Activated CD8-positive, alpha-beta T cell treated with anti-CD3 and anti-CD28 coated beads, Interleukin-2, amount 10 ng/mL, durations not matched to agents 7 days and 5 days (primary cell): ENCODE measurements at regions of chr2 and their contacts with region 1.

Region 1: DNA sequence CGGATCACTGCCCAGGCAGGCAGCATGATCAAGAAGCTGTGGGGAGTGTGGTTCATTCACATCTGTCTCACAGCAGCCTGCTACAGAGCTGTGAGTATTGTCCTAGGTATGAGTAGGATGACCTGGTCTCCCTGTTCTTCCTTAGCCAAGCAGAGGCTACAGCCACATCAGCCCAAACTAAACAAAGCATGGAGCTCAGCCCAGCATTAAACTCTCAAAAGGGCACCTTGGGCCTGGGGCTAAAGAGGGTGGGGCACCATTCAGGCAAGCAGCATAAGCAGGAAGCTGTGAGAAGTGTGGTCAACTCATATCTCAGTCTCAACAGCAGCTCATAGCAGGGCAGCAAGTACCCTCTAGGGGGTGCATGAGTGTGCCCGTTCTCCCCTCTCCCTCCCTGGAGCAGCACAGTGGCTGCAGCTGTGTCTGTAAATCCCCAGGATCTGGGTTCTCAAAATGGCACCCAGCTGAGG is 139.6 kb downstream of the TRABD2A start:
- DNase-seq: peak; percentile 75
- ATAC-seq: peak; percentile 99
- H3K4me3 Mint-ChIP-seq: no peak overlapping the region
- H3K27ac Mint-ChIP-seq: peak overlapping the region; percentile 85
- H3K4me1 Mint-ChIP-seq: peaks cover 15% of the 10 kb centered on the region
- H3K27me3 Mint-ChIP-seq: no peaks in the 10 kb centered on the region

Region 2: GRCh38 chr2:84022810-84023431 is 718.4 kb before region 1 on chr2:
- CTCF ChIA-PET with region 1: no interaction called
- POLR2A ChIA-PET with region 1: no interaction called
- DNase-seq: peak; percentile 28
- ATAC-seq: no peak
- H3K4me3 Mint-ChIP-seq: no peak overlapping the region
- H3K27ac Mint-ChIP-seq: no peak overlapping the region
- H3K4me1 Mint-ChIP-seq: no peaks in the 10 kb centered on the region
- H3K27me3 Mint-ChIP-seq: no peaks in the 10 kb centered on the region

Region 3: DNA sequence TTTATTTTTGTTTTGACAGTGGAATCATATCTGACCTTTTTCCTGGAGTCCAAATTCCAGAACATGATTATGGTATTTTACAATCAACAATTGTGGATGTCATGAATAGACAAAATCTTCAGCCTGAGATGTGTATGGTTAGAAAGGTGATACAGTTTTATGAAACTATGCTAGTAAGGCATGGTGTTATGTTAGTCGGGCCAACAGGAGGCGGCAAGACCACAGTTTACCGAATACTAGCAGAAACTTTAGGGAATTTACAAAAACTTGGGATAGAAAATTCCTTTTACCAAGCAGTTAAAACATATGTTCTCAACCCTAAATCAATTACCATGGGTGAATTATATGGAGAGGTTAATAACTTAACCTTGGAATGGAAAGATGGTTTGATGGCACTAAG is 88.0 kb before region 1 on chr2:
- CTCF ChIA-PET with region 1: interaction called, 13 read pairs
- POLR2A ChIA-PET with region 1: no interaction called
- DNase-seq: no peak
- ATAC-seq: no peak
- H3K4me3 Mint-ChIP-seq: no peak overlapping the region
- H3K27ac Mint-ChIP-seq: peak overlapping the region; percentile 45
- H3K4me1 Mint-ChIP-seq: peaks cover 66% of the 10 kb centered on the region
- H3K27me3 Mint-ChIP-seq: no peaks in the 10 kb centered on the region

Region 4: DNA sequence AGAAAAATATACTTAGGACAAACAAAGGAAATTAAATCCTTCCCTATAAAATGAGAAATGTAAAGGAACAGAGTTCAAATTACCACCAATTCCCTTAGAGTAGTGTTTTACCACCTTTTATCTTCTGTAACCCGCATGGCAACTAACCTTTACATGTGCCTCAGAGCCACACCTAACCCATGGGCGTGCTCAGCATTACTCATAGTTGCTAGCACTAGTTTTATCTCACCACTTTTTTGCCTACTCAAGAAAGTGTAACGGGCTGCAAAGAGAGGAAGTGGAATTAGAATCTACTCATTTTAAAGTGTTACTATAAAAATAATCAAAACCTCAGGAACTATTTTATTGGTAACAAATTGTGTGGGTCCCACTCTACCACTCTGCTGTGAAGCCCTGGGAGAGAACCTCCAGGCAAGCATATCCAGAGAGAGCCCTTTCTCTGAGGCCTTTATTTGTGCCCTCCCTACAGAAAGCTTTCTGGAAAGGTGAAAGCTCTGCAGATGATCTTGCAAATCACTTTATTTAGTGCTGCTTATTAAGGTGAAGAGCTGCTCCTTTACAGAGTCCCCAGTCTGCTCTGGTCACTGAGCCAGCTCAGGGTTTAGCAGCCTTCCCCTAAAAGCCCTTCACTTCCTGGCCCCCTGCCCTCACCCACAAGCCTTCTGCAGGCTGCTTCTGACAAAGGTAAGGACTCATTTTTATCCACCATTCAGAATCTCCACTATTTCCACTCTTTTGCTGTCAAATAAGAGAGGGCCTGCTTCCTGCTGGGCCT is 40.8 kb after region 1 on chr2:
- CTCF ChIA-PET with region 1: interaction called, 17 read pairs
- POLR2A ChIA-PET with region 1: interaction called, 5 read pairs
- DNase-seq: peak; percentile 77
- ATAC-seq: peak; percentile 93
- H3K4me3 Mint-ChIP-seq: peak overlapping the region; percentile 66
- H3K27ac Mint-ChIP-seq: peak overlapping the region; percentile 95
- H3K4me1 Mint-ChIP-seq: peaks cover 68% of the 10 kb centered on the region
- H3K27me3 Mint-ChIP-seq: no peaks in the 10 kb centered on the region

Region 5: GRCh38 chr2:84846041-84846663 is 104.8 kb after region 1 on chr2:
- CTCF ChIA-PET with region 1: interaction called, 16 read pairs
- POLR2A ChIA-PET with region 1: no interaction called
- DNase-seq: peak; percentile 72
- ATAC-seq: peak; percentile 75
- H3K4me3 Mint-ChIP-seq: peak overlapping the region; percentile 38
- H3K27ac Mint-ChIP-seq: peak overlapping the region; percentile 96
- H3K4me1 Mint-ChIP-seq: peaks cover 92% of the 10 kb centered on the region
- H3K27me3 Mint-ChIP-seq: no peaks in the 10 kb centered on the region

Region 6: DNA sequence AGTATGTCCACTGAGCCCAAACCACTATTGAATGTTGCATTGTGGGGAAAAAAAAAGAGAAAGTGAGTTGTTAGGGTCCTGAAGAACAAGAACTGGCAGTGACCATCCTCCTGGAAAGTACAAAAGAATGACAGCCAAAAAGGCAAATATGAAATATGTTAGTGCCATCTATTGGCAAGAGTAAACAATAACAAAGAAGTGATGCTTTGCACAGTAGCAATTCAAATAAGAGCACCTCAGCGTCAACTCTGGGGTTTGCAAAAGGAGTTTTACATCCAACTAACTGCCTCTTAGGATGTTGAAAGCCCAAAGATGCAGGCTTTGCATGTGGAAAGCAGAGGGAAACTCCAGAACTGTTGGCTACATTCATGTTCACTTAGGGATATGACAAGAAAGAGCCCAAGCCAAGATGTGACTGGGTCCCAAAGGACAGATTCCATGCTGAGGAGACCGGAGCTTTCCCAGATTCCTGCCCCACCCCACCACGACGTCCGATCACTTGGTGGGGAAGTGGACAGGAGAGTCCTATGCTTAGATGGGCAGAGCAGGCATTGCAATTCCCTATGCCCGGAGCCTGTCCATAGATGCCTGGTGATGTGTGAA is 124.0 kb after region 1 on chr2:
- CTCF ChIA-PET with region 1: interaction called, 18 read pairs
- POLR2A ChIA-PET with region 1: no interaction called
- DNase-seq: peak; percentile 27
- ATAC-seq: peak; percentile 61
- H3K4me3 Mint-ChIP-seq: no peak overlapping the region
- H3K27ac Mint-ChIP-seq: peak overlapping the region; percentile 75
- H3K4me1 Mint-ChIP-seq: peaks cover 82% of the 10 kb centered on the region
- H3K27me3 Mint-ChIP-seq: no peaks in the 10 kb centered on the region